Dendritic cell treated with granulocyte-macrophage colony-stimulating factor and Interleukin-4, amounts not matched to agents 40 ng/mL and 50 ng/mL, for 4 days (primary cell): ENCODE measurements at regions of chr7 and their contacts with region 1.

Region 1: DNA sequence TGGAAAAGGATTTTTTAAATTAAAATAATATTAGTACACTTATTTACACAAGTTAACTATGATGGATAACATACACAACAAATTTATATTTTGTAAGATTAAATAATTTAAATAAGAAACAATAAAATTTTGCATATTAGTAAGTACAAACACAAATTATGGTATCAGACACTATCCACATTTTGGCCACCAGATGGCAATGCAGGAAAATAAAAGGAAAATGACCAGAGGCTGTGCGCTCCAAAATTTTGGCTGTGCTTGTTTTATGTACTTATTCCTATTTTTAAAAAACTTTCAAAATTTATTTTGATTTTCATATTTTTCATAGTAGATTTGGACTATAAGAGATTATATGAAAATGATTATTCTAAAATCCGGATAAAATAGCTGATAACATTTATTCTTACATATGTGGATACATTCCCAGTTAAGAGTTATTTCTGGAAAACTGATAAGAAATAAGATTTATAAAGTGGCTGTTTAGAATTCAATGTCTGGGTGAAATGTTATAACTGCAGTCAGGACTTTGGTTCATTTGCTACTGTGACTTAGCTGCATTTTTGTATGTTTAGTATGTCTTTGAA is 274.7 kb upstream of the HGF start:
- H3K4me3 Mint-ChIP-seq: no peak overlapping the region
- H3K27ac Mint-ChIP-seq: no peak overlapping the region
- H3K4me1 Mint-ChIP-seq: no peaks in the 10 kb centered on the region
- H3K27me3 Mint-ChIP-seq: no peaks in the 10 kb centered on the region

Region 2: DNA sequence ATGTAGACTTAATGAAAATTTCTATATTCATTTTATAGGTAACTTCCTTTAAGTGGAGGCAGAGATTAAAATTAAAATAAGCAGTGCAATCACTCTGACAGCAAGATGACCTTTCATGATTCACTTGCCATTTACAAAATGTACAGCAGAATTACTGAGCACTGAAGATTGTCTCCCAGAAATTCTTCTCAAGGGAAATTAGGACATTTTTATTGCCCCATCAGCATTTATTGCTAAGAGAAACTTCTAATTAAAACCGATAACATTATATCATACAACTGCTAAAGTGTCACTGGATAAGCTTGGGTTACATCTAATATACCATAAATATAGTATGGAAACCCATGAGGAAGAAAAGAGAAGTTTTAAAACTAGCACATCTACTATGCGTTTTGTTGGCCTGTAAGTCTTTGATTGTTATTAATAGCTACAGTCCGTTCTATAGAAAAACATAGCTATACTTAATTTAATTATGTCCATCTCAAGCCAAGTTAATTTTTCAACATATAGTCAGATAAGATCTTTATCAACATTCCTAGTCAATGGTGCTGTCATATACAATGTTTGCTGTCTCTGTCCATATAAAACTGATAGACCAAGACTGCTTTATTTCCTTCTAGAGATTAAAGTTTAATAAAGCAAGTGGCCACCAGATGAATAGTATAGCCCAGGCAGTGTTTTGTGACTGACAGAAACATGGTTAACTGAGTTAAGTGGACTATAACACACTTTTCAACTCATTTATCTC is 57.7 kb before region 1 on chr7:
- intact Hi-C with region 1: no loop called
- H3K4me3 Mint-ChIP-seq: no peak overlapping the region
- H3K27ac Mint-ChIP-seq: no peak overlapping the region
- H3K4me1 Mint-ChIP-seq: no peaks in the 10 kb centered on the region
- H3K27me3 Mint-ChIP-seq: no peaks in the 10 kb centered on the region

Region 3: GRCh38 chr7:82114237-82114636 is 69.6 kb after region 1 on chr7:
- intact Hi-C with region 1: no loop called
- H3K4me3 Mint-ChIP-seq: no peak overlapping the region
- H3K27ac Mint-ChIP-seq: no peak overlapping the region
- H3K4me1 Mint-ChIP-seq: no peaks in the 10 kb centered on the region
- H3K27me3 Mint-ChIP-seq: no peaks in the 10 kb centered on the region

Region 4: GRCh38 chr7:82572195-82572880 is 527.7 kb after region 1 on chr7:
- intact Hi-C with region 1: loop called (anchors 1 kb)
- H3K4me3 Mint-ChIP-seq: no peak overlapping the region
- H3K27ac Mint-ChIP-seq: no peak overlapping the region
- H3K4me1 Mint-ChIP-seq: no peaks in the 10 kb centered on the region
- H3K27me3 Mint-ChIP-seq: peaks cover 4% of the 10 kb centered on the region

Region 5: GRCh38 chr7:82605247-82605872 is 560.8 kb after region 1 on chr7:
- intact Hi-C with region 1: loop called (anchors 2 kb)
- H3K4me3 Mint-ChIP-seq: no peak overlapping the region
- H3K27ac Mint-ChIP-seq: no peak overlapping the region
- H3K4me1 Mint-ChIP-seq: no peaks in the 10 kb centered on the region
- H3K27me3 Mint-ChIP-seq: no peaks in the 10 kb centered on the region